Upper lobe of right lung (tissue), 1 donor: ENCODE measurements at regions of chr3 and their contacts with region 1.

Region 1: DNA sequence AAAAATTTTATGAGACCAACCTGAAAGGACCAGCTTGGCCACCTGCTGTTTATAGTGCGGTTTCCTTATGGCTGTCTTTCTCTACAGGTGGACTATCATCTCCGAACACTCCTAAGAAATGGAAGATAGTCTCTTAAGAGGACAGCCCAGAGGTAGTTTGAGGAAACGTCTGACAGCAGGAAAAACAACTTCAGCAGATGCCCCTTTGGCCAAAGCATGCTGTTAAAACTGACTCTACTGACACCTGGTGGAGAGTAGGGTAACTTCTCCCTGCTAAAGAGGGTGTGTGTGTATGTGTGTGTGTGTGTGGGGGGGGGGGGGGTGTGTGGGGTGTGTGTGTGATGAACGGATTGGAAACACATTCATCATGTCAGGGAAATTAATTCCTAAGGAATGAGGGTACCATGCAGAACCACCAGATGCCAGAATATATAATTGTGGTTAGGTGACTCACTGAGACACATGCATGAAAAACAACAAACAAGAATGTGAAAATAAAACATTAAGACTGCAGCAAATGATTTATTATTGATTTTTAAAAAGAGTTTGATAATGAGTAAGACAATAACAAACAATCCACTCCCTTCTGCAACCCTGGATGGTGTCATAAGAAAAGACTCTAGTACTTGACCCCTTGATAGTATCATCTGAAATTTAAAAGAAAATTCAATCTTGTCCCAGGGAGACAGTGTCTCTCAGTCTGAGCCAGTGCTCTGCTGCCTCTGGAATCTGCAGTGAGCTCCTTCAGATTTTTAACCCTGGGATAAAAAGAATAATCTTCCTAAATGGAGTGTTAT is 256.5 kb downstream of the THRB start:
- DNase-seq: no peak
- ATAC-seq: peak; percentile 93
- H3K4me3 ChIP-seq: no peak overlapping the region
- H3K27ac ChIP-seq: no peak overlapping the region
- H3K4me1 ChIP-seq: peaks cover 9% of the 10 kb centered on the region
- H3K27me3 ChIP-seq: no peaks in the 10 kb centered on the region
- CTCF ChIP-seq: peak; percentile 50

Region 2: GRCh38 chr3:24004171-24004938 is 233.8 kb before region 1 on chr3:
- intact Hi-C with region 1: loop called (anchors 5 kb)
- DNase-seq: no peak
- ATAC-seq: no peak
- H3K4me3 ChIP-seq: no peak overlapping the region
- H3K27ac ChIP-seq: no peak overlapping the region
- H3K4me1 ChIP-seq: peaks cover 1% of the 10 kb centered on the region
- H3K27me3 ChIP-seq: no peaks in the 10 kb centered on the region
- CTCF ChIP-seq: no peak

Region 3: DNA sequence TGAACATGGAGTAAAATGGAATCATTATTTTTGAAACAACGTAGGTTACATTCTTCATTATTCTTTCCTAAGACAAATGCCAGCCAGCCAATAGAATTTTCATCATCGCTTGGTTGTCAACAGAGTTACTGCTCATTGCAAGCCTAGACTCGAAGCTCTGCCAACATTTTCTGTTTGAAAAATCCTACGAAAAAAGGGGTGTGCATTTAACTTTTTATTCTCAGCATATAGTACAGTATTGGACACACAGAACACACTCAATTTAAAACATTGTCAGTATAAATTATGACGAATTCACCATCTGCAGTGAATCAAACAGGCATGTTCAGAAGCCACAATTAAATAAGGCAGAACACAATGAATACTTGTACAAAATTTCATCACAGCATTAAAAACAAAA is 61.0 kb before region 1 on chr3:
- intact Hi-C with region 1: no loop called
- DNase-seq: no peak
- ATAC-seq: no peak
- H3K4me3 ChIP-seq: no peak overlapping the region
- H3K27ac ChIP-seq: no peak overlapping the region
- H3K4me1 ChIP-seq: no peaks in the 10 kb centered on the region
- H3K27me3 ChIP-seq: no peaks in the 10 kb centered on the region
- CTCF ChIP-seq: no peak